ENCODE measurements at regions of chr13 and their contacts with region 1.

Region 1: DNA sequence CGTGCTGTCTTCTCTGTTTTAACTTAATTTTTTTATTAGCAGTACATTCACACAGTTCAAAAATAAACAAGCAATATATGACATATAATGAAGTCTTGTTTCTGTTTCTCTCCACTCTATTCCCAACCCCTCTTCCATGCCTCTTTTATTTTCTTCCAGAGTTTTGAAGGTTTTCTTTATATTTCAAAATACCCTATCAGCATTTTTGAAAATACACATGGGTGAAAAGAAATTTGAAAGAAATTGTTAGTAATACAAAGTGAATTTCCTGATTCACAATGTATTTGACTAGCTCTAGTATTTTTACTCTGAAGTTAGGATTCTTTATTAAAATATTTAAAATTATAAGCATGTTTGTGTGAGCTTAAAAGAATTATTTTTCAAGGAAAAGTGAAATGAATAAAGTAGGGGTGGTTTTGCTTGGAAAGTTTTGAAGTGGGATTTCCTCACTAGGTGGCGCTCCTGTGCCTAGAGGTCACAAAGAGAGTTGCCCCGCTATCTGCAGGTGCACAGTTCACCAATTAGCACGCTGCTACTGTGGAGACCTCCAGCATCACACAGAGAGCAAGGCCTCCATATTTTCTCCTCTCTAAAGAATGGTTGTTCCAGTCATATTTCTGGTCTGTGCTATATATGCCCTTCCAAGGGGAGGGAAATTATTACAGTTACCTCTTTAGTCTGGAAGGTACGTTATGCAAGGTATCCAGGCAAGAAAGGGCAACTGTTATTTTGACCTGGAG is 37.6 kb downstream of the SOX21 start:
- DNase-seq: peak; percentile 80
- ATAC-seq: peak; percentile 72
- H3K4me3 Mint-ChIP-seq: no peak overlapping the region
- H3K27ac Mint-ChIP-seq: no peak overlapping the region
- H3K4me1 Mint-ChIP-seq: no peaks in the 10 kb centered on the region
- H3K27me3 Mint-ChIP-seq: peaks cover 27% of the 10 kb centered on the region

Region 2: GRCh38 chr13:94660695-94661326 is 14.0 kb before region 1 on chr13:
- CTCF ChIA-PET with region 1: interaction called, 26 read pairs
- POLR2A ChIA-PET with region 1: no interaction called
- intact Hi-C with region 1: no loop called
- DNase-seq: peak; percentile 42
- ATAC-seq: peak; percentile 24
- H3K4me3 Mint-ChIP-seq: no peak overlapping the region
- H3K27ac Mint-ChIP-seq: no peak overlapping the region
- H3K4me1 Mint-ChIP-seq: peaks cover 37% of the 10 kb centered on the region
- H3K27me3 Mint-ChIP-seq: peaks cover 31% of the 10 kb centered on the region

Region 3: GRCh38 chr13:94722609-94723345 is 48.0 kb after region 1 on chr13:
- CTCF ChIA-PET with region 1: no interaction called
- POLR2A ChIA-PET with region 1: no interaction called
- intact Hi-C with region 1: no loop called
- DNase-seq: no peak
- ATAC-seq: no peak
- H3K4me3 Mint-ChIP-seq: no peak overlapping the region
- H3K27ac Mint-ChIP-seq: no peak overlapping the region
- H3K4me1 Mint-ChIP-seq: no peaks in the 10 kb centered on the region
- H3K27me3 Mint-ChIP-seq: peaks cover 29% of the 10 kb centered on the region

Region 4: GRCh38 chr13:95156208-95156607 is 481.4 kb after region 1 on chr13:
- CTCF ChIA-PET with region 1: no interaction called
- POLR2A ChIA-PET with region 1: no interaction called
- intact Hi-C with region 1: loop called in 1 of 2 experiments (anchors 10 kb)
- DNase-seq: no peak
- ATAC-seq: no peak
- H3K4me3 Mint-ChIP-seq: no peak overlapping the region
- H3K27ac Mint-ChIP-seq: no peak overlapping the region
- H3K4me1 Mint-ChIP-seq: peaks cover 9% of the 10 kb centered on the region
- H3K27me3 Mint-ChIP-seq: no peaks in the 10 kb centered on the region